ENCODE measurements at regions of chr22 and their contacts with region 1.

Region 1: DNA sequence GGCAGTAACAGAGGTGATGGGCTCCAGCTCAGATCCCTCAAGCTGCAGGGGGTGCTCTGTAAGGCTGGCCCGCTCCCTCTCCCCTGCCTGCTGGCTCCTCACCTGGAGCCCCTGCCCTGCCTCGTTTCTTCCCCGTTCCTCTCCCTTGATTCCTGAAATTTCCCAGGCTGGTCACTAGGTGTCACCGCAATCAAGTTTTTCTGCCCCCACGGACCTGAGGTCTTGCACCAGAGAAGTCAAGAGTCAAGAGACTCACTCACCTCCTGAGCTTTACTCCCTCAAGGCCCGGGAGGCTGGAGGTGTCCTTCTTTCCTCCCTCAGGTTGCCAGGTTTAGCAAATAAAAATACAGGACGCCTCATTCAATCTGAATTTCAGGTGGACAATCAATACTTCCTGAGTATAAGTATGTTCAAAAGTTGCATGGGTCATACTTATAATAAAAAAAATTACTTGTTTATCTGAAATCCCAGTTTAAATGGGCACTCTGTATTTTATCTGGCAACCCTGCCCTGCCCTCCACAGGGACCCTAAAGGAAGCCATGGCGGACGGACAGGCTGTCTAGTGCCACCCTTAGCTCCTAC is 69.2 kb downstream of the SCUBE1 start:
- DNase-seq: peak in 1 of 2 donors; percentile 39
- ATAC-seq: peak; percentile 44 to 78 (median 63)
- H3K4me3 ChIP-seq: no peak overlapping the region
- H3K27ac ChIP-seq: no peak overlapping the region
- H3K4me1 ChIP-seq: no peaks in the 10 kb centered on the region
- H3K27me3 ChIP-seq: peaks cover 0 to 52% (median 4%) of the 10 kb centered on the region in 7 donors
- CTCF ChIP-seq: peak; percentile 34 to 79 (median 72)

Region 2: DNA sequence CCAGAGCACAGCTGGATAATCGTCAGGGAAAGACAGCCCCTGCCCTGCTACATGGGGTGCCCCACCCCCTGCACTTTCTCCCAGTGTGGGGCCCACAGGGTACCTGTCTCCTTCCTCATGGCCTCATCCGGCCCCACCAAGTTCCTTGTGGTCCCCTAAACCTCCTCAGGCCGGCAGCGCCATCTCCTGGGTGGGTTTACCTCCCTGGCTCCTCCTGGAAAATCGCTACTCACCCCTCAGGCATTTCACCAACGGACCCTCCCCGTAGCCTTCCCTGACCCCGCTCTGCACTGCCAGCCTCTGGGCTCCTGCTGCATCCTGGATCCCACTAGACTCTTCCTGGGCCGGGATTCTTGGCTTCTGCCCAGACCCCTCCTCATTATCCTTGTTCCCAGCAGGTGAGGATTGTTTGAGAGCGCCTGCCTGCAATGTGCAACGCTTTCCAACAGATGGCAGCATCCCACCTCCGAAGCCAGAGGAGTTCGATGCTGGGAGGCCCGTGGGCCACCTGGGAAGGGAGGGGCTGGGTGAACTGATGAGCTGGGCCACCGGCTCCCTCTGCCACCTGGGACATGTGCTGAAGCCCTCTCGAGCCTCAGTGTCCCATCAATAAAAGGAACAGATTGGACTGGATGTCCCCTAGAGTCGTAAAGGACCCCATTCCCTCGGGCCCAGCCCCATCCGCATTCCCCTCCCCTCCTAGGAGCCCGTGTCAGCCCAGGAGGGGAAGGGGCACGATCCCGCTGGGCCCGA is 42.8 kb before region 1 on chr22:
- intact Hi-C with region 1: loop called in 4 of 10 experiments (anchors 2 to 5 kb)
- DNase-seq: peak; percentile 38 to 60
- ATAC-seq: peak in 6 of 8 donors; percentile 21 to 57 (median 35)
- H3K4me3 ChIP-seq: no peak overlapping the region
- H3K27ac ChIP-seq: no peak overlapping the region
- H3K4me1 ChIP-seq: peaks cover 0 to 7% (median 2%) of the 10 kb centered on the region in 9 donors
- H3K27me3 ChIP-seq: peaks cover 0 to 37% (median 9%) of the 10 kb centered on the region in 7 donors
- CTCF ChIP-seq: peak; percentile 82 to 96 (median 93)

Region 3: DNA sequence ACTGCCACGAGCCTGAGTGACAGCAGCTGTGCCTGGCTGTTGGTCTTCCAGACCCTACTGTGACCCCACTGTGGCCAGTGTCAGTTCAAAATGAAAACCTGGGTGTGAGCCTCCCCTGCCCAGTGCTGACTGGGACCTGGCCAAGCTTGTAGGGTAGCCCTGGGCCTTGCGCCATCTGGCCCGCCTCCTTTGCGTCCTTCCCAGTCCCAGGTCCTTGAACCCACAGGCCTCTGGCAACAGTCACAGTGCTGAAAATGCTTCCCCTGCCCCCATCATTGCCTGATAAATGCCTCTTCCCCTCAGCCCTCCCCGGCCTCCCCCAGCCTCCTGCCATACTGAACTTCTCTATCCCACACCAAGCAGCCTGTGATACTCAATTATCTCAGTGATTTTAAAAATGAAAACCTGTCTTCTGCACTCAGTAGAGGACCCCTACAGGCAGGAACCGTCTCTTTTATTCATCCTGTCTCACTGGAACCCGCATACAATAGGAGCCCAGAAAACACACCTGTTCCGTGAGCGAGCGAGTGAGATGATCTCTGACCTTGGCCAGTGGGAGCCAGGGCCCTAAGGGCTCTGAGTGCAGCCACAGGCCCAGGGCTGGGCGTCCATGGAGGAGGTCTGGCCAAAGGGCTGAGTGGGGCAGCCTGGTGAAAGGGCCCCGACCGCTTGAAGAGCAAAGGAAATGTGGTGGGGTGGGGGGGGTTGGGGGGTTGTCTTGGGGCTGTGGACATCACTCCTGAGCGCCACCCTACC is 37.4 kb before region 1 on chr22:
- intact Hi-C with region 1: loop called in 4 of 10 experiments (anchors 2 to 5 kb)
- DNase-seq: peak; percentile 78 to 80
- ATAC-seq: peak; percentile 72 to 95 (median 86)
- H3K4me3 ChIP-seq: no peak overlapping the region
- H3K27ac ChIP-seq: no peak overlapping the region
- H3K4me1 ChIP-seq: peaks cover 0 to 47% (median 30%) of the 10 kb centered on the region in 9 donors
- H3K27me3 ChIP-seq: peaks cover 0 to 23% (median 9%) of the 10 kb centered on the region in 7 donors
- CTCF ChIP-seq: no peak

Region 4: DNA sequence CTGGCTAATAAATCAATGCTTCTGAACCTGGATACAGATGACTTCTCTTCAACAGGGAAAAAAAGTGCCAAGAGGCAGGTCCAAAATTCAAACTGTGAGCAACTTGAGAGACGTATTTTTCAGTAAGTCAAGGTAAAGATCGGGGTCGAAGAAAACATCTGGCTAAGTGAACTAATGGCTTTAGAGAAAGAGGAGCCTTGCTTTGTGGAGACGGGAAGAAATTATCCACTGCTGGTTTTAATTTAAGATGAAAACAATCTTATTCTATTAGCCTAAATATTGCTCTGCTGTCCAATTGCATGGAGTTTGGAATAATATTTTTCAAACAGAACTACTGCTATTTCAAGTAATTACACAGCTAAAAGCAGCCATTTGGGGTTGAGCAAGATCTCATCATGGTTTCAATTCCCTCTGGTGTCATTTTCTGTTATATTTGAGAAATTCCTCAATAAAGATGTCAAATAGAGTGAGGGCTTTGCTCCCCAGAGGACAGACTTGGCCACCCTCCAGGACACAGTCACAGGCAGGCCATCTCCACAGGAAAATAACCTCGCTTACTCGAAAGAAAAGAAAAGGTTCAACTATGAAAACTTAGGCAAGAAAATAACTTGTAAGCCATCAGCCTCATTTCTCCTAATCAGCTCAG is 39.4 kb after region 1 on chr22:
- intact Hi-C with region 1: no loop called
- DNase-seq: peak; percentile 36 to 64
- ATAC-seq: peak in 2 of 8 donors; percentile 34 to 41
- H3K4me3 ChIP-seq: no peak overlapping the region
- H3K27ac ChIP-seq: no peak overlapping the region
- H3K4me1 ChIP-seq: peaks cover 0 to 17% (median 10%) of the 10 kb centered on the region in 9 donors
- H3K27me3 ChIP-seq: peaks cover 0 to 22% (median 0%) of the 10 kb centered on the region in 7 donors
- CTCF ChIP-seq: no peak

Region 5: DNA sequence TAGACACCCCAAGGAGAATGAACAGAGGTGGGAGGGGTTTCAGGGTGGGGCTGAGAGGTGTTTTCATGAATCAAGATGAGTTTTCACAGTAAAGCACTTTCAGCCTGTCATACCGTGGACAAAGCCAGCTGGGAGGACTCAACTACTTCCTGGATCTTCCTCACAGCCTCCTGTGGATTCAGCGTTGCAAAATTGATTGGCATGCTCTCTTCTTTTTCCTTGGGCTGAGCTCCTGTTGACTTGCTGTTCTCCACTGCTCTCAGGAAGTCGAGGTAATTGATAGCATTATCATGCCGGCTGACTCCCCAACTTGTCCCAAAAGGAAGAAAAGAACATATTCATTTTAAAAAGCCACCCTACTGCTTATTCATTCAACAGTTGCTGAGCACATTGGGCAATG is 306.4 kb after region 1 on chr22:
- intact Hi-C with region 1: no loop called
- DNase-seq: no peak
- ATAC-seq: no peak
- H3K4me3 ChIP-seq: no peak overlapping the region
- H3K27ac ChIP-seq: no peak overlapping the region
- H3K4me1 ChIP-seq: no peaks in the 10 kb centered on the region
- H3K27me3 ChIP-seq: peaks cover 0 to 16% (median 9%) of the 10 kb centered on the region in 7 donors
- CTCF ChIP-seq: no peak

Measured in heart right ventricle (tissue), 16 donors.